ENCODE measurements at regions of chr7 and their contacts with region 1.

Region 1: GRCh38 chr7:148914208-148914777 is 30.2 kb upstream of the EZH2 start:
- DNase-seq: peak; percentile 87
- H3K4me3 Mint-ChIP-seq: peak overlapping the region; percentile 62
- H3K27ac Mint-ChIP-seq: peak overlapping the region; percentile 93
- H3K4me1 Mint-ChIP-seq: peaks cover 66% of the 10 kb centered on the region
- H3K27me3 Mint-ChIP-seq: no peaks in the 10 kb centered on the region

Region 2: DNA sequence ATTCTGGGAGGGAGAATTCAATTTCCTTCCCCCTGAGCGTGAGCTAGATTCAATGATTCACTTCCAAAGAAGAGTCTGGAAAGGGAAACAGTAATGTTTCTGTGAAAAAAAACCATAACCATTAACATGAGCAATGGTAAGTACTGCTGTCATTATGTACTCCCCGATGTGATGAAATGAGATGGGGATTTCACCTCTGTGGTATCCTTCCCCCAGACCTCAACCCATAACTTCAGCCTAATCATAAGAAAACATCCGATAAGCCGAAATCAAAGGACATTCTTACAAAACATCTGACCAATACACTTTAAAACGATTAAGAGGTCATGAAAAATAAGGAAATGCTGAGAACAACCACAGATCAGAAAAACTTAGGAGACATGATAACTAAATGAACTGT is 57.4 kb before region 1 on chr7:
- CTCF ChIA-PET with region 1: interaction called, 3 read pairs
- POLR2A ChIA-PET with region 1: interaction called, 15 read pairs
- intact Hi-C with region 1: loop called (anchors 1 kb)
- DNase-seq: peak; percentile 50
- H3K4me3 Mint-ChIP-seq: peak overlapping the region; percentile 40
- H3K27ac Mint-ChIP-seq: peak overlapping the region; percentile 82
- H3K4me1 Mint-ChIP-seq: peaks cover 39% of the 10 kb centered on the region
- H3K27me3 Mint-ChIP-seq: no peaks in the 10 kb centered on the region

Region 3: GRCh38 chr7:148927123-148928045 is 13.1 kb after region 1 on chr7:
- CTCF ChIA-PET with region 1: interaction called, 7 read pairs
- POLR2A ChIA-PET with region 1: interaction called, 9 read pairs
- intact Hi-C with region 1: loop called (anchors 1 kb)
- DNase-seq: no peak
- H3K4me3 Mint-ChIP-seq: no peak overlapping the region
- H3K27ac Mint-ChIP-seq: peak overlapping the region; percentile 76
- H3K4me1 Mint-ChIP-seq: peaks cover 33% of the 10 kb centered on the region
- H3K27me3 Mint-ChIP-seq: no peaks in the 10 kb centered on the region

Measured in activated CD4-positive, alpha-beta memory T cell treated with anti-CD3 and anti-CD28 coated beads for 36 hours (primary cell).